ENCODE measurements at regions of chr3 and their contacts with region 1.

Region 1: DNA sequence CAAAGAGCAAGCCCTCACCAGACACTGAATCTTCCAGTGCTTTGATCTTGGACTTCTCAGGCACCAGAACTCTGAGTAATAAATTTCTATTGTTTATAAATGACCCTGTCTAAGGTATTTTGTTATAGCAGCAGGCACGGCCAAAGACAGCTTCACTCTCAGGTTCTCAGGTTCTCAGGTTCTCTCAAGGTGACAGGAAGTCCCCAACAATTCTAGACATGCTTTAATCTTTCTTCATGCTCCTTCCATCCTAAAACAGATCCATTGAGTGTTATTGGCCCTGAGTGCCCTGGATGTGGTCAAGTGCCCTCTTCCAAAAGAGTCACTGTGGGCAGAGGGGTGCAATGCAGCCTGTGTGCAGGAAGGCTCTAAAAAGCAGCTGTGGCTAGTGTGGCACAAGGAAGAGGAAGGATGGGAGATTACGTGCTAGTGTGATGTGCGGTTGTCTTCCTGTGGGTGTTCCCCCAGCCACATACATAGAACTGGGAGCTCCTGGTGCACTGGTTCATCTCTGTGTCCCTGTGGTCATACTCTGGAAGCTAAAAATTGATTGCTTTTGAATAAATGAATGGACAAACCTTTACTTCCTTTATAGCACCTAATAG is 11.0 kb upstream of the RAB7A start:
- DNase-seq: no peak
- H3K4me3 ChIP-seq: no peak overlapping the region
- H3K27ac ChIP-seq: no peak overlapping the region
- H3K4me1 ChIP-seq: no peaks in the 10 kb centered on the region
- H3K27me3 ChIP-seq: peaks cover 4% of the 10 kb centered on the region

Region 2: GRCh38 chr3:128383316-128384235 is 331.4 kb before region 1 on chr3:
- in situ Hi-C with region 1: no loop called
- DNase-seq: peak; percentile 62
- H3K4me3 ChIP-seq: no peak overlapping the region
- H3K27ac ChIP-seq: no peak overlapping the region
- H3K4me1 ChIP-seq: peaks cover 23% of the 10 kb centered on the region
- H3K27me3 ChIP-seq: no peaks in the 10 kb centered on the region

Region 3: DNA sequence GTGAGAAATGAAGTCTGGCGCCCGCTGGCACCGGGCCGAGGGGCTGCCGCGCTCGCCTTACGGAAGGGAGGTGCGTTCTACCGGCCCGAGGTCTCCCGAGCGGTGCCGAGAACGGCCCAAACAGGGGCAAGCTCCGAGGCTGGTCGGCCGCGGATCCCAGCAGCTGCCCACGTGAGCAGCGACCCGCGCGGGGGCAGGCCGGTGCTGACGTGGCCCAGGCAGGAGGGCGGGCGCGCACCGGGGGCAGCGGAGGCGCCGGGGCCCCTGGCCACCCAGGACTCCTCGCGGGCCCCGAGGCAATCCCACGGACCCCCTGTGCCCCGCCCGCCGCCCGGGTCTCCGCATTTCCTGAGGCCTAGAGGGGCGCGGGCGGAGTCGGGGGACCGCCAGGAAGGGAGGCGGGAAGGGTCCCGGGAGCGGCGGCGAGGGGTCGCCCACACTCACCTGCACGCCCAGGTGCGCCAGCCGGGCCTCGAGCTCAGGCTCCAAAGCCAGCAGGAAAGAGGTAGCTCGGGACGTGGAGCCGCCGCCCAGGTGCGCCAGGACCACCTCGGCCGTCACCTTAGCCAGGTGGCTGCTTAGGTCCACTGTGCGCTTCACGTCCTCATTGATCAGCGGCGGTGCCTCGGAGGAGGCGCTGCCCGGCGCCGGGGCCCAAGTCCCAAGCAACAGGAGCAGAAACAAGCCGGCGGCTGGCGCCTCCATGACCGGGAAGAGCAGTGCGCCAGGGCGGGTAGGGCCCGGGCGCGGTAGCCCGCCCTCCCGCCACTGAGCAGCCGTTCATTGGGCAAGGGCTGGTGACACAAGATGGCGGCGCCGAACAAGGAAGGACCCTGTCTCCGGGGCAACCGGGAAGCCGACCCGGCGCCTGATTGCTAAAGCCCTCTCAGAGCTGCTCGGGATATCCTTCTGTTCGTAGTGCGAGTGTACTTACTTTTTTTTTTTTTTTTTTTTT is 64.6 kb before region 1 on chr3 and contains the start of gene RPN1:
- in situ Hi-C with region 1: loop called (anchors 10 kb)
- DNase-seq: peak; percentile 98
- H3K4me3 ChIP-seq: peak within 1 kb of the TSS; percentile 87
- H3K27ac ChIP-seq: peak within 1 kb of the TSS; percentile 93
- H3K4me1 ChIP-seq: peaks cover 8% of the 10 kb centered on the region; the same call in 1 of the 2 replicates
- H3K27me3 ChIP-seq: no peaks in the 10 kb centered on the region
- total RNA-seq, gene RPN1: 393 and 395 TPM in 2 replicates

Measured in GM23248 (cell line).